ENCODE measurements at regions of chr15 and their contacts with region 1.

Region 1: DNA sequence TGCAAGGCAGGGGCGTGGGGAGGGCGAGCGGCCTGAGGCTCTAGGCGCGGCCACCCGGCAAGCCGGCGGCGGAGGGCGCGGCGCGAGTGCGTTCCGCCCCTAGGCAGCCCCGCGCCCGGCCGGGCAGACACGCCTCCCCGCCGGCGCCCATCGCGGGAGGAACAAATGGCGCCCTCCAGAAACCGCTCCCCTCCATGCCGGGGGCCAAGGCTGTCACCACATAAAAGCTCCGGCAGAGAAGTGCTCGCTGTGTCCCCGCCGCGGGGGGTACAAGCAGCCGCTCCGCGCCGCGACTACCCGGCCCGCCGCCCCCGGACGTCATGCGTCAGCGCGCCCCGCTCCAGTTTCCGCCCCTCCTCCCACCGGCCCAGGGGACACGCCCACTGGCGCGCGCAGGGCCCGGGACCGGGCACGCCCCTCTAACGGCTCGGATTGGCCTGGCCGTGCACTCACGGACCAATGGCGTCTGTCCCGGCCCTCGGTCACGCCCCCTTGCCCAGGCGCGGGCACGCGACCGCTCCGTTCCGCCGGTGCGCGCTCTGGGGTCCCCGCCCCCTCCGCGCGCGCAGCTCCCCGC is 391 bp upstream of the KLF13 start:
- DNase-seq: peak; percentile 98 to 100 (median 100)
- ATAC-seq: peak; percentile 86
- H3K4me3 ChIP-seq: peak overlapping the region; percentile 72
- H3K4me3 Mint-ChIP-seq: peak overlapping the region; percentile 65 to 92 (median 81)
- H3K27ac ChIP-seq: peak overlapping the region; percentile 99
- H3K27ac Mint-ChIP-seq: peak overlapping the region; percentile 31 to 97 (median 78)
- H3K4me1 ChIP-seq: peaks cover 28 to 36% of the 10 kb centered on the region in 2 donors
- H3K4me1 Mint-ChIP-seq: peaks cover 41 to 64% (median 56%) of the 10 kb centered on the region in 7 donors
- H3K27me3 ChIP-seq: no peaks in the 10 kb centered on the region
- H3K27me3 Mint-ChIP-seq: no peaks in the 10 kb centered on the region

Region 2: GRCh38 chr15:31200735-31201151 is 125.5 kb before region 1 on chr15:
- CTCF ChIA-PET with region 1: interaction called, 9 read pairs
- POLR2A ChIA-PET with region 1: interaction called, 5 read pairs
- intact Hi-C with region 1: loop called (anchors 1 to 5 kb)
- DNase-seq: peak; percentile 45 to 81 (median 72)
- ATAC-seq: peak; percentile 77
- H3K4me3 ChIP-seq: no peak overlapping the region
- H3K4me3 Mint-ChIP-seq: no peak overlapping the region
- H3K27ac ChIP-seq: no peak overlapping the region
- H3K27ac Mint-ChIP-seq: peak overlapping the region in 3 of 9 donors; percentile 4 to 77 (median 38)
- H3K4me1 ChIP-seq: peaks cover 0 to 31% of the 10 kb centered on the region in 2 donors
- H3K4me1 Mint-ChIP-seq: peaks cover 10 to 48% (median 36%) of the 10 kb centered on the region in 7 donors
- H3K27me3 ChIP-seq: no peaks in the 10 kb centered on the region
- H3K27me3 Mint-ChIP-seq: peaks cover 0 to 33% (median 0%) of the 10 kb centered on the region in 5 donors

Region 3: DNA sequence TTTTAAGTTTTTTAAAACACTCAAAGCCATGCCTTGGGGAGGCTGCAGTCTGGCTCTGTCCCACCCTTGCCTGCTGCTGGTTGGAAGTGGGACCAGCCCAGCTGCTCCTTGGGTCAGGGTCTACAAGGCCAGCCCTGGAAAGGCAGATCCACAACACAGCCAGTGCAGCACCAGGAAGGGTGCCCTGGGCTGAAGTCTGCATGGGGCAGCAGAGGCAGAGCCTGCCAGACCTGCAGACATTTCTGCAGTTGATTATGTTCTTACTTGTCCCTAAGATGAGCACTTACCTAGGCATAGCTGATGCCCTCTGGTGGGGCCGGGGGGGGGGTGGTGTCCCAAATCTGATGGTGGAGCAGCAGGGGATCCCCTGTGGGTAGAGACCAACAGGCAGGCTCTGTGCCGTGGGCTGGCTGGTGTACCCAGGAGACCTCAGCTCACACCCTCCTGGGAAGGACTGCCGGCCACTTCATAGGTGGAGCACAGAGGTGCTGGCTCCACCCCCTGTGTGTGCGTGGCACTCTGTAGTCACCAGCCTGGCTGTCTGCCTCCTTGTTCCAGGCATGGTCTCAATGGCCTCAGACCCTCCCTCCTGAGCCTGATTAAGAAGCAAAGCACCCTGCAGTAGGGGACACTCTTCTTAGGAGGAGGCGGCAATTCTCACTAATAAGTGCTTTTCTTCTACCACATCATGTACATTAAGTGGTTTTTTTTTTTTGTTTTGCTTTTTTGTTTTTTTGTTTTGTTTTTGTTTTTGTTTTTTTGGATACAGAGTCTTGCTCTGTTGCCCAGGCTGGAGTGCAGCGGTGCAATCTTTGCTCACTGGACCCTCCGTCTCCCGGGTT is 97.0 kb before region 1 on chr15:
- CTCF ChIA-PET with region 1: no interaction called
- POLR2A ChIA-PET with region 1: no interaction called
- intact Hi-C with region 1: no loop called
- DNase-seq: no peak
- ATAC-seq: peak; percentile 46
- H3K4me3 ChIP-seq: no peak overlapping the region
- H3K4me3 Mint-ChIP-seq: no peak overlapping the region
- H3K27ac ChIP-seq: no peak overlapping the region
- H3K27ac Mint-ChIP-seq: no peak overlapping the region
- H3K4me1 ChIP-seq: peaks cover 0 to 6% of the 10 kb centered on the region in 2 donors
- H3K4me1 Mint-ChIP-seq: peaks cover 11 to 28% (median 13%) of the 10 kb centered on the region in 7 donors
- H3K27me3 ChIP-seq: no peaks in the 10 kb centered on the region
- H3K27me3 Mint-ChIP-seq: peaks cover 0 to 23% (median 0%) of the 10 kb centered on the region in 5 donors

Region 4: GRCh38 chr15:31241888-31242522 is 84.2 kb before region 1 on chr15:
- CTCF ChIA-PET with region 1: no interaction called
- POLR2A ChIA-PET with region 1: interaction called, 10 read pairs
- intact Hi-C with region 1: loop called (anchors 1 kb)
- DNase-seq: peak in 5 of 9 donors; percentile 47 to 78 (median 65)
- ATAC-seq: peak; percentile 95
- H3K4me3 ChIP-seq: no peak overlapping the region
- H3K4me3 Mint-ChIP-seq: peak overlapping the region; percentile 2 to 74 (median 50)
- H3K27ac ChIP-seq: peak overlapping the region; percentile 32
- H3K27ac Mint-ChIP-seq: peak overlapping the region; percentile 36 to 97 (median 90)
- H3K4me1 ChIP-seq: peaks cover 13 to 28% of the 10 kb centered on the region in 2 donors
- H3K4me1 Mint-ChIP-seq: peaks cover 34 to 49% (median 42%) of the 10 kb centered on the region in 7 donors
- H3K27me3 ChIP-seq: no peaks in the 10 kb centered on the region
- H3K27me3 Mint-ChIP-seq: peaks cover 0 to 3% (median 0%) of the 10 kb centered on the region in 5 donors

Region 5: DNA sequence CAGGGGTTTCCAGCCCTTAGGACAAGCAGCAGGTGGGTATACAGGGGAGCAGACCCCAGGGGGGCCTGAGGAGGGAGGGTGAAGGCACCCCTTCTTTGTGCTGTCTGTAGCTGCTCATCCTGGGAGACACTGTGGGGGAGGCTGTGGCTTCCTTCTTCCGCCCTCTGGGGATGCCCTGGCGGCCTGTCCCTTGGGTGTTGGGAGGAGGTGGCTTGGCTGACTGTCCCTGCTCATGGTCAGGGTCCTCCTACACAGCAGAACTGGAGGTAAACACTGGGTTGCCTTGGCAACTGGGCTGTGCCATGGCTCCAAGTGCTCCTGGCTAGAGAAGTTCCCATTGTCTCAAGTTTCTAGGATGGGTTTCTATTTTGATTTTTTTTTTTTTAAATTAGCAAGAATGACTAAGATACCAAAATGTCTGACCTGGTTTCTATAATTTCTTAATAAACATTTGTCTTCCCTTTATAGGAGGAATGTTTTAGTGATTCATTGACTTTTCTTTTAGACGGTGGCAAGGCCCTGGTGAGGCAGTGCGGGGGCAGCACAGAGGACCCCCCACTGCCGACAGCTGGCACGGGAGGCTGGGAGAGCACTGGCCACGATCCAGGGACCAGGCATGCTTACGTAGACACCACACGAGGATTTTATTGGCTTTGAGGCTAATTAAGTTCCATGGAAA is 12.8 kb after region 1 on chr15:
- CTCF ChIA-PET with region 1: interaction called, 3 read pairs
- POLR2A ChIA-PET with region 1: interaction called, 43 read pairs
- intact Hi-C with region 1: loop called (anchors 1 kb)
- DNase-seq: peak in 1 of 9 donors; percentile 76
- ATAC-seq: peak; percentile 47
- H3K4me3 ChIP-seq: peak overlapping the region; percentile 3
- H3K4me3 Mint-ChIP-seq: peak overlapping the region; percentile 27 to 98 (median 74)
- H3K27ac ChIP-seq: peak overlapping the region; percentile 94
- H3K27ac Mint-ChIP-seq: peak overlapping the region; percentile 79 to 99 (median 91)
- H3K4me1 ChIP-seq: peaks cover 95 to 98% of the 10 kb centered on the region in 2 donors
- H3K4me1 Mint-ChIP-seq: peaks cover 85 to 100% (median 98%) of the 10 kb centered on the region in 7 donors
- H3K27me3 ChIP-seq: no peaks in the 10 kb centered on the region
- H3K27me3 Mint-ChIP-seq: no peaks in the 10 kb centered on the region

Region 6: GRCh38 chr15:31391687-31392671 is 65.7 kb after region 1 on chr15:
- CTCF ChIA-PET with region 1: no interaction called
- POLR2A ChIA-PET with region 1: interaction called, 13 read pairs
- intact Hi-C with region 1: loop called (anchors 1 kb)
- DNase-seq: peak; percentile 61 to 87 (median 73)
- ATAC-seq: peak; percentile 91
- H3K4me3 ChIP-seq: peak overlapping the region; percentile 72
- H3K4me3 Mint-ChIP-seq: peak overlapping the region; percentile 81 to 95 (median 90)
- H3K27ac ChIP-seq: peak overlapping the region; percentile 68
- H3K27ac Mint-ChIP-seq: peak overlapping the region; percentile 79 to 95 (median 88)
- H3K4me1 ChIP-seq: peaks cover 13 to 30% of the 10 kb centered on the region in 2 donors
- H3K4me1 Mint-ChIP-seq: peaks cover 21 to 61% (median 46%) of the 10 kb centered on the region in 7 donors
- H3K27me3 ChIP-seq: no peaks in the 10 kb centered on the region
- H3K27me3 Mint-ChIP-seq: no peaks in the 10 kb centered on the region

Region 7: DNA sequence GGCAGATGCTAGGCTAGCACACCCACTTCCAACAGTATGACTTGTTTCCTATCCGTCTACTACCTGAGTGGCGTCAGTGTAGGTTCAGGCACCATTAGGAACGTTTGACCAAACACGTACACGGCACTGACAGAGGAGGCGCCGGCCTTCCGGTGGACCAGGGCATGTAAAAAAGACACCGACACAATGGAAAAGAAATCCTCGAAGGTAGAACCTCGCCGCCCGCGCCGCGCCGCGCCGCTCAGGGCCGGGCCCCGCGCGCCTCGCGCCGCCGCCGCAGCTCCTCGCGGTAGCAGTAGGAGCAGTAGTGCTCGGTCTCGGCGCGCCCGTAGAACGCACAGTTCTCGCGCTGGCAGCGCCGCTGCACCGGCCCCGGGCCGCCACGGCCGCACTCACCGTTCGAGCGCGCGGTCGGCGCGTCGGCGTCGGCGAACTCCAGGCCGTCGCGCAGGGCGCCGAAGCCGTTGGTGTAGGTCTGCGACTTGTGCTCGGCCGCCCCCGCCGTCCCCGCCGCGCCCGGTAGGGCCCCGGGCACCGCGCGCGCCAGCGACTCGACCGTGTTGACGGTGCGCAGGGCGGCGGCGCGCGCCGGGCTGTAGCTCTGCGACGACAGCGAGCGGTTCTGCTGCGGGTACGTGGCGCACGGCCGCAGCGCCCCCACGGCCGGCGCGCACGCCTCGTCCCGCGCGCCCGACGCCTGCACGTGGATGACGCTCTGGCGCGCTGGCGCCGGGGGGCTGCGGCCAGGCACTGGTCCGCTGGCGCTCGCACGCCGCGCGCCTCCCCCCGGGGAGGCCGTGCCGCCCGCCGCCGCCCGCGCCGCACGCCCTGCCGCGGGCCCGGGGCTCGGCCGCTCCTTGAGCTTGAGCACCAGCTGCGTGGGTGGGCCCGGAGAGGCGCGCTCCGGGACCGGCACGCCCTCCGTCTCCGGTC is 157.1 kb after region 1 on chr15:
- CTCF ChIA-PET with region 1: no interaction called
- POLR2A ChIA-PET with region 1: interaction called, 15 read pairs
- intact Hi-C with region 1: loop called (anchors 1 kb)
- DNase-seq: peak; percentile 42 to 63 (median 53)
- ATAC-seq: peak; percentile 80
- H3K4me3 ChIP-seq: peak overlapping the region; percentile 59
- H3K4me3 Mint-ChIP-seq: peak overlapping the region; percentile 91 to 97 (median 96)
- H3K27ac ChIP-seq: no peak overlapping the region
- H3K27ac Mint-ChIP-seq: peak overlapping the region; percentile 90 to 97 (median 94)
- H3K4me1 ChIP-seq: peaks cover 26 to 35% of the 10 kb centered on the region in 2 donors
- H3K4me1 Mint-ChIP-seq: peaks cover 25 to 75% (median 54%) of the 10 kb centered on the region in 7 donors
- H3K27me3 ChIP-seq: no peaks in the 10 kb centered on the region
- H3K27me3 Mint-ChIP-seq: no peaks in the 10 kb centered on the region

Region 8: GRCh38 chr15:31526916-31527690 is 200.9 kb after region 1 on chr15:
- CTCF ChIA-PET with region 1: no interaction called
- POLR2A ChIA-PET with region 1: no interaction called
- intact Hi-C with region 1: no loop called
- DNase-seq: no peak
- ATAC-seq: no peak
- H3K4me3 ChIP-seq: no peak overlapping the region
- H3K4me3 Mint-ChIP-seq: no peak overlapping the region
- H3K27ac ChIP-seq: no peak overlapping the region
- H3K27ac Mint-ChIP-seq: no peak overlapping the region
- H3K4me1 ChIP-seq: no peaks in the 10 kb centered on the region
- H3K4me1 Mint-ChIP-seq: no peaks in the 10 kb centered on the region
- H3K27me3 ChIP-seq: no peaks in the 10 kb centered on the region
- H3K27me3 Mint-ChIP-seq: peaks cover 6 to 18% (median 9%) of the 10 kb centered on the region in 5 donors

Region 9: GRCh38 chr15:31554261-31554660 is 228.0 kb after region 1 on chr15:
- CTCF ChIA-PET with region 1: no interaction called
- POLR2A ChIA-PET with region 1: no interaction called
- intact Hi-C with region 1: no loop called
- DNase-seq: no peak
- ATAC-seq: no peak
- H3K4me3 ChIP-seq: no peak overlapping the region
- H3K4me3 Mint-ChIP-seq: no peak overlapping the region
- H3K27ac ChIP-seq: no peak overlapping the region
- H3K27ac Mint-ChIP-seq: no peak overlapping the region
- H3K4me1 ChIP-seq: no peaks in the 10 kb centered on the region
- H3K4me1 Mint-ChIP-seq: no peaks in the 10 kb centered on the region
- H3K27me3 ChIP-seq: no peaks in the 10 kb centered on the region
- H3K27me3 Mint-ChIP-seq: peaks cover 0 to 15% (median 6%) of the 10 kb centered on the region in 5 donors

Region 10: DNA sequence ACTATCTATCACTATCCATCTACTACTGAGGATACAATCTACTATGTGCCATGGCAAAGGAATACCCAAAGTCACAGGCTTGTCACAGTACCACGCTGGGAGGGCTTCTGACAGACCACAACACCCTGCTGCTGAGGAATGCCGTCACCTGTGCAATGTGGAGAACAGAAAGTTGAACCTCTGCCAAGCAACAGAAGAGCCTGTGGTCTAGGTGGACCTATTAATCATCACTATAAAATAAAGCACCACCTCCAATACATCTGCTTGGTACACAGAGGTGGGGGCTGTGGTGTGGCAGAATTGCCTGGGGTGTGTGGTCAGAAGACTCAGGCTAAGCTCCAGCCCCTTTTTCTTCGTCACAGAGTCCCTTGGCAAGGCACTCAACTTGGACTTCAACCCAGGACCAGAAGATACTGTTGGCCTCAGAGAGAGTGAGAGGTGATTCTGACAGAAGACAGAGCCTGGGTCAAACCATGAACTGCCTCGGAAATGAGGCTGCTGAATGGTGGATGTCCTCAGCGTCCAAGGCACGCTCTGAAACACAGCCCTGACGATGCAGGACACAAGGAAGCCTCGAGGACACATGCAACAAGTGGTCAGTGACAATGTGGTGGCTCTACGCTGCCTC is 514.7 kb after region 1 on chr15:
- CTCF ChIA-PET with region 1: no interaction called
- POLR2A ChIA-PET with region 1: no interaction called
- intact Hi-C with region 1: no loop called
- DNase-seq: no peak
- ATAC-seq: no peak
- H3K4me3 ChIP-seq: no peak overlapping the region
- H3K4me3 Mint-ChIP-seq: no peak overlapping the region
- H3K27ac ChIP-seq: no peak overlapping the region
- H3K27ac Mint-ChIP-seq: no peak overlapping the region
- H3K4me1 ChIP-seq: no peaks in the 10 kb centered on the region
- H3K4me1 Mint-ChIP-seq: peaks cover 0 to under 1% (median 0%) of the 10 kb centered on the region in 7 donors
- H3K27me3 ChIP-seq: no peaks in the 10 kb centered on the region
- H3K27me3 Mint-ChIP-seq: peaks cover 0 to 9% (median 4%) of the 10 kb centered on the region in 5 donors

Measured in naive thymus-derived CD4-positive, alpha-beta T cell (primary cell).